ENCODE measurements at regions of chr18 and their contacts with region 1.

Region 1: GRCh38 chr18:21612125-21612991 is at the start of gene SNRPD1:
- DNase-seq: peak; percentile 64 to 75
- ATAC-seq: peak; percentile 94 to 97
- H3K4me3 ChIP-seq: peak within 1 kb of the TSS; percentile 51 to 79 (median 68)
- H3K27ac ChIP-seq: peak within 1 kb of the TSS; percentile 75 to 84 (median 78)
- H3K4me1 ChIP-seq: peaks cover 9 to 16% of the 10 kb centered on the region in 2 donors
- H3K27me3 ChIP-seq: no peaks in the 10 kb centered on the region
- CTCF ChIP-seq: peak; percentile 89 to 97 (median 92)
- POLR2A ChIP-seq: peak; percentile 29 to 42
- total RNA-seq, gene SNRPD1: 4.7 to 16.9 (median 14.1) TPM

Region 2: GRCh38 chr18:21191596-21192307 is 420.6 kb before region 1 on chr18:
- in situ Hi-C with region 1: no loop called
- intact Hi-C with region 1: loop called (anchors 10 kb)
- DNase-seq: peak in 1 of 2 donors; percentile 25
- ATAC-seq: no peak
- H3K4me3 ChIP-seq: no peak overlapping the region
- H3K27ac ChIP-seq: no peak overlapping the region
- H3K4me1 ChIP-seq: no peaks in the 10 kb centered on the region
- H3K27me3 ChIP-seq: no peaks in the 10 kb centered on the region
- CTCF ChIP-seq: peak in 3 of 5 experiments; percentile 26 to 52 (median 28)
- POLR2A ChIP-seq: no peak

Region 3: GRCh38 chr18:21242141-21242779 is 370.1 kb before region 1 on chr18 and contains the start of gene GREB1L:
- in situ Hi-C with region 1: no loop called
- intact Hi-C with region 1: loop called (anchors 10 kb)
- DNase-seq: peak; percentile 17 to 45
- ATAC-seq: peak; percentile 80 to 83
- H3K4me3 ChIP-seq: peak within 1 kb of the TSS; percentile 59 to 80 (median 68)
- H3K27ac ChIP-seq: peak within 1 kb of the TSS; percentile 57 to 76 (median 70)
- H3K4me1 ChIP-seq: peaks cover 0 to 4% of the 10 kb centered on the region in 2 donors
- H3K27me3 ChIP-seq: peaks cover 0 to 8% (median 0%) of the 10 kb centered on the region in 3 donors
- CTCF ChIP-seq: peak in 1 of 5 experiments; percentile 13
- POLR2A ChIP-seq: peak in 1 of 2 donors; percentile 28
- total RNA-seq, gene GREB1L: 4.4 to 14.4 (median 7.4) TPM

Region 4: DNA sequence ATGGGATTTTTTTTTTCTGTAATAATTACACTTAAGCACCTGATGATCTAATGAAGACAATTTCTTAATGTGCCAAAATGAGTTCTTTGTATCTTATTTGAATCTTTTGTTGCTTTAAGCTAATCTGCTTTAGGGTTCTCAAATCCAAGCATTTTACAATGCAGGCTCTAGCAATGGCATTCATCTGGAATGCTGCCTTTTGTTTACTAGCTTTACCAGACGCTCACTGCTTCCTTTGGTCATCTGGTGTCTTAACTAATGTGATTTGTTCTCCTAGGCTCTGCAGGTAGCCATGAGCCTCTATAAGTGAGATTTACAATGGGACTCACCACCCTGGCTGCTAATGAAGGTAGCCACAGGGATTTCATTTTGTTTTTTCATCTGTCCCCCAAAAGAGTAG is 270.0 kb before region 1 on chr18:
- in situ Hi-C with region 1: no loop called
- intact Hi-C with region 1: no loop called
- DNase-seq: no peak
- ATAC-seq: no peak
- H3K4me3 ChIP-seq: no peak overlapping the region
- H3K27ac ChIP-seq: no peak overlapping the region
- H3K4me1 ChIP-seq: no peaks in the 10 kb centered on the region
- H3K27me3 ChIP-seq: no peaks in the 10 kb centered on the region
- CTCF ChIP-seq: no peak
- POLR2A ChIP-seq: no peak

Region 5: GRCh38 chr18:21704603-21705364 is 92.4 kb after region 1 on chr18 and contains the start of gene ABHD3:
- in situ Hi-C with region 1: no loop called
- intact Hi-C with region 1: loop called (anchors 2 kb)
- DNase-seq: peak; percentile 90 to 92
- ATAC-seq: peak; percentile 92 to 96
- H3K4me3 ChIP-seq: peak within 1 kb of the TSS; percentile 82 to 97 (median 89)
- H3K27ac ChIP-seq: peak within 1 kb of the TSS; percentile 86 to 97 (median 96)
- H3K4me1 ChIP-seq: peaks cover 12 to 20% of the 10 kb centered on the region in 2 donors
- H3K27me3 ChIP-seq: no peaks in the 10 kb centered on the region
- CTCF ChIP-seq: peak; percentile 54 to 72 (median 62)
- POLR2A ChIP-seq: peak; percentile 94 to 99
- total RNA-seq, gene ABHD3: 3.8 to 4.5 (median 4.2) TPM

Region 6: DNA sequence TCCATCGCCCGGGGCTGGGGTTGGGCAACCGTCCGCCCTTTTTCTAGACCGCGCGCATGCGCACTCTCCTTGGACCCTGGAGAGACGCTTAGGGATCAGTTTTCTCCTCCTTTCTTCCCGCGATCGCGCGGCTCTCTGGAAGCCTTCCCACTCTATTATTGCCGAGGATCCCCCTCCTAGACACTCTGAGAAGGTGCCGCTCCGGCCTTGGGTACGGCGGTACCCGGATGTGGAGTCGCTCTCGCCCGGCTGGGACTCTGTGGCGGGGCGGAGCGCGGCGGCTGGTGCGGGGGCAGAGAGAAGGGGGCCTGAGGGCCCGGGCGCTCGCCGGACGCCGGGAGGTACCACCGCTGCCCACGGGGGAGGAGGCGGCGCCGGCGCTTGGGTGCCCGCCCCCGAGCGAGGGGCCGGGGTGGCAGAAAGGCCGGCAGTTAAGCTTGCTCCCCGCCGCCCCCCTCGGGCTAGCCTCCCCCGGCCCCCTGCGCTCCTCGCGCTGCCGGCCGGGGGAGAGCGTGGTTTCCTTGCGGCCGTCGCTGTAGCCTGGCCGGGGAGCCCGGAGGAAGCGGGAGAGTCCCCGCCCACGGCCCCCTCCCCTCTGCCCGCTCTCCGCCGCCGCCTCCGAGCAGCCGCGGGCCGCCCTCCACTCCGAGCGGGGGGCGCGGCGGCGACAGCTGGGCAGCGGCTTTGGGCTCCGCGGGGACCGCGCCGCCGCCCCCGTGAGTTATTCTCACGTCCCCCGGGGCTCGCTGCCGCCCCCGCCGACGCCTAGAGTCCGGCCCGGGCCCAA is 128.6 kb after region 1 on chr18 and contains the start of gene MIB1:
- in situ Hi-C with region 1: loop called in 1 of 4 experiments (anchors 10 kb)
- intact Hi-C with region 1: no loop called
- DNase-seq: no peak
- ATAC-seq: peak; percentile 91 to 94
- H3K4me3 ChIP-seq: peak within 1 kb of the TSS; percentile 65 to 97 (median 81)
- H3K27ac ChIP-seq: peak within 1 kb of the TSS; percentile 92 to 99 (median 96)
- H3K4me1 ChIP-seq: peaks cover 30 to 37% of the 10 kb centered on the region in 2 donors
- H3K27me3 ChIP-seq: no peaks in the 10 kb centered on the region
- CTCF ChIP-seq: peak in 1 of 5 experiments; percentile 2
- POLR2A ChIP-seq: peak; percentile 84 to 88
- total RNA-seq, gene MIB1: 16.4 to 22.3 (median 21.6) TPM

Region 7: DNA sequence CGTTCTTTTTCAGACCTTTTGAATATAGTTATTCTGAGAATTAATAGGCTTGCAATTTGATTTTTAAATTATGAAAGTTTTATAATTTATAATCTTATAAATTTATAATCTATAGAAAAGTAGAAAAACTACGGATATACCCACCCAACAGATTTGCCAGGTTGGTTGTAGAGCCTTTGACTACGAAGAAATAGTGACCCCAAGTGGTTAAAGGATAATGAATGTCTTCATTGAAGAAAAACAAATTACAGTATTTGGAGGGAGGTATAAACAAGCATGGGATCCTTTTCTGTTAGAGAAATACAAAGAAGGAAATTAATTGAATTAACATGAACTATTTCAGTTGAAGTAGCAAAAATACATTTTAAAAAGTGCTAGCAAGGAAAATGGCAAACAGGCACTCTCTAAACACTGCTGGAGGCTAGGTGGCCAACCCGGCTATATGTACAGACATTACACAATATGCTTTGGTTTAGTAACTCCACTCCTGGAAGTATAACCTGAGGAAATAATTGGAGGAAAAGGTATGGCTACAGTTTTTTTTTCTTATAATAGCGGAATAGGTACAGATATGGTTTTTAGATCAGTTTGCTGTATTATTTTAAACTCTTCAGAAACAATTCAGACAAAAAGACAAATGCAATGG is 239.1 kb after region 1 on chr18:
- in situ Hi-C with region 1: no loop called
- intact Hi-C with region 1: loop called (anchors 5 kb)
- DNase-seq: no peak
- ATAC-seq: peak in 1 of 2 donors; percentile 78
- H3K4me3 ChIP-seq: peak overlapping the region in 2 of 4 donors; percentile 23 to 35
- H3K27ac ChIP-seq: no peak overlapping the region
- H3K4me1 ChIP-seq: peaks cover 9 to 22% of the 10 kb centered on the region in 2 donors
- H3K27me3 ChIP-seq: no peaks in the 10 kb centered on the region
- CTCF ChIP-seq: peak in 3 of 5 experiments; percentile 25 to 67 (median 51)
- POLR2A ChIP-seq: no peak

Measured in gastrocnemius medialis (tissue), 4 donors.